Heart right ventricle (tissue), 16 donors: ENCODE measurements at regions of chr7 and their contacts with region 1.

Region 1: GRCh38 chr7:113083132-113083815 is 3.4 kb downstream of the GPR85 start:
- DNase-seq: no peak
- ATAC-seq: no peak
- H3K4me3 ChIP-seq: no peak overlapping the region
- H3K27ac ChIP-seq: no peak overlapping the region
- H3K4me1 ChIP-seq: peaks cover 0 to 13% (median 0%) of the 10 kb centered on the region in 9 donors
- H3K27me3 ChIP-seq: peaks cover 0 to 39% (median 0%) of the 10 kb centered on the region in 7 donors
- CTCF ChIP-seq: no peak

Region 2: DNA sequence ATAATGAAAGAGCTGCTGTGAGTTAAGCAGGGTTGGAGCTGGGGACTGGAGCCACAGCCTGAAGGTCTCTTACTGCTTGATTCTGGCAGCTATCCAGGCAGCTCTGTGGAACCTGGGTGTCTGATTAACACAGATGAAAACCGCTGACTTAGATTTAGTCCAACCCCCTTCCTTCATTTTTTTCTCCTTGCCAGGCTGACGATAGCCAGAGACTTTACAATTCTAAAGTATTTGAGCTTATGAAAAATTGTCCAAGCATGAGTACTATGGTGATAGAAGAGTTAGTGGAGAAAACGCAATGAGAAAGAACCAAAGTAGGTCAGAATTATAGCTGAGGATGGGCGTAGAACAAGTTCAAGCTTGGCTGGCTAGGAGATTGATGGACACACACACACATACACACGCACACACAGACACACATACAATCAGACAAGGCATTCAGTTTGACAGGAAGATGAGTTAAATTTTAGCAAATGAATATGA is 16.9 kb after region 1 on chr7:
- intact Hi-C with region 1: loop called in 1 of 10 experiments (anchors 2 kb)
- DNase-seq: peak; percentile 21 to 60
- ATAC-seq: peak; percentile 42 to 92 (median 83)
- H3K4me3 ChIP-seq: peak overlapping the region in 6 of 10 donors; percentile 3 to 28 (median 20)
- H3K27ac ChIP-seq: peak overlapping the region in 5 of 10 donors; percentile 8 to 48 (median 33)
- H3K4me1 ChIP-seq: peaks cover 0 to 17% (median 0%) of the 10 kb centered on the region in 9 donors
- H3K27me3 ChIP-seq: no peaks in the 10 kb centered on the region
- CTCF ChIP-seq: no peak

Region 3: DNA sequence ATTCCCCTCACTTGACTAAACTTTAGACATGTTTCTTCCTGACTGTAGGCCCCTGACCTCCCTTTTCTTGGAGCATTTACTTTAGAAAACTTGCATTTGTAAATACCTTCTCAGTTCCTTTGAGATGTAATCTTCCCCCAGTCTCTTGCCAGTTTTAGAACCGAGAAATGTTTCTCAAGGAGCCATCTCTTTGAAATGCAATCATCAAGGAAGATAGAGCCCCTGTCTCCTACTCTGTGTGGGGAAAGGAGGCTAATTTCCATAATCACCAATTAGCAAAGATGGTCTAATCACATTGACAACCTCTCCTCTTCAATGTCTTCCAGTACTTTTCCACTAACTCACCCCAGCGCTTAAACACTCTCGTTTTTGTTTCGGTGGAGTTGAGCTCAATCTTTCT is 105.1 kb after region 1 on chr7:
- intact Hi-C with region 1: no loop called
- DNase-seq: no peak
- ATAC-seq: no peak
- H3K4me3 ChIP-seq: no peak overlapping the region
- H3K27ac ChIP-seq: no peak overlapping the region
- H3K4me1 ChIP-seq: no peaks in the 10 kb centered on the region
- H3K27me3 ChIP-seq: no peaks in the 10 kb centered on the region
- CTCF ChIP-seq: no peak